GM12878 (cell line): ENCODE measurements at regions of chr10 and their contacts with region 1.

Region 1: GRCh38 chr10:5813287-5814109 is at the start of gene GDI2:
- DNase-seq: peak; percentile 82
- ATAC-seq: peak; percentile 85
- H3K4me3 ChIP-seq: peak within 1 kb of the TSS; percentile 91
- H3K27ac ChIP-seq: peak within 1 kb of the TSS; percentile 97
- H3K4me1 ChIP-seq: peaks cover 41% of the 10 kb centered on the region
- H3K27me3 ChIP-seq: no peaks in the 10 kb centered on the region
- CTCF ChIP-seq: peak in 1 of 3 experiments; percentile 8; a peak in 1 of 6 replicates
- EP300 ChIP-seq: no peak
- POLR2A ChIP-seq: peak; percentile 90
- RAD21 ChIP-seq: no peak
- polyA plus RNA-seq, gene GDI2: 264 to 334 TPM

Region 2: DNA sequence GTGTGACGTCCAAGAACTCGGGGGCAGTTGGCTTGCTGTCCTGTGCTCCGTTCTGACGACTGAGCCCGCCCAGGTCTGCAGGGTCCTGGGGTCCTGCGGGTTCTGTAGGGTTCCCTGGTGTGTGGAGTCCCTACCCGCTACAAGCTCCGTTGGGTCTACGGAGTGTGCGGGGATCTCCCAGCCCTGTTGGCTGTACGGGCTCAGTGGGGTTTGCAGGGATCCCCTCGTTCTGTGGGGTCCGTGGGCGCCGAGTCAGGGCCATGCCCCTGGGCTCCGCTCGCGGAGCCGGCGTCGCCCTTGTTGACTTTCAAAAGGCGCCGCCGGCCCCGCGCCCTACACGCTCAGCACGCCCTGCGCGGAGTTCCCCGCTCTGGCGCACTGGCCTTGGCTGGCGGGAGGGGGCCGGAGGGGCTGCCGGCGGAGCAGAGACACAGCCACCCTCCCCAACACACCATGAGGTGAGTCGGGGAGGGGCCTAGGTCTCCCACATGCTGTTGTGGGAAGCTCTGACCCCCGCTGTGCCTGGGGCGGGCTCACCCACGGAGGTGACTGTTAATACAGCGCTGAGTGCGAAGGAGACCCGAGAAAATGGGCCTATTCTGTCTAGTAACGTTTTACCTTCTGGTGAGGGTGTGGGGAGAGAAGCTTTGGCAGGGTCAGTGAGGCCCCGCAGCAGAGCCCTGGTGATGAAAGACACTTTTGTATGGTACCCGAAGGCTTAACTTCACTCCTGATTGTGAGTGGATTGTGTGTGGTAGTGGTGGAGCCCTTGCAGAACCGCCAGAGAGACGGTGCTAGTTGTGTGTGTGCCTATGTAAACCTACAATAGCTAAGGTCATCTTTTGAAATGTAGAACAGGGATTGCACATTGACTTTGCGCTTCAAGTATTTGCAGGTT is 120.8 kb before region 1 on chr10:
- CTCF ChIA-PET with region 1: interaction called, 8 read pairs
- POLR2A ChIA-PET with region 1: interaction called, 23 read pairs
- RAD21 ChIA-PET with region 1: no interaction called
- SMC1A ChIA-PET with region 1: interaction called, 13 read pairs
- in situ Hi-C with region 1: no loop called
- intact Hi-C with region 1: no loop called
- DNase-seq: peak; percentile 32
- ATAC-seq: peak; percentile 90
- H3K4me3 ChIP-seq: peak overlapping the region; percentile 83
- H3K27ac ChIP-seq: peak overlapping the region; percentile 77
- H3K4me1 ChIP-seq: peaks cover 21% of the 10 kb centered on the region
- H3K27me3 ChIP-seq: no peaks in the 10 kb centered on the region
- CTCF ChIP-seq: 0 out of 6 replicates have a peak, but pooled peaks of 1 of the 3 experiments have one; percentile 5
- EP300 ChIP-seq: peak in 1 of 2 experiments; percentile 40; a peak in 1 of 4 replicates
- POLR2A ChIP-seq: peak; percentile 73
- RAD21 ChIP-seq: no peak

Region 3: DNA sequence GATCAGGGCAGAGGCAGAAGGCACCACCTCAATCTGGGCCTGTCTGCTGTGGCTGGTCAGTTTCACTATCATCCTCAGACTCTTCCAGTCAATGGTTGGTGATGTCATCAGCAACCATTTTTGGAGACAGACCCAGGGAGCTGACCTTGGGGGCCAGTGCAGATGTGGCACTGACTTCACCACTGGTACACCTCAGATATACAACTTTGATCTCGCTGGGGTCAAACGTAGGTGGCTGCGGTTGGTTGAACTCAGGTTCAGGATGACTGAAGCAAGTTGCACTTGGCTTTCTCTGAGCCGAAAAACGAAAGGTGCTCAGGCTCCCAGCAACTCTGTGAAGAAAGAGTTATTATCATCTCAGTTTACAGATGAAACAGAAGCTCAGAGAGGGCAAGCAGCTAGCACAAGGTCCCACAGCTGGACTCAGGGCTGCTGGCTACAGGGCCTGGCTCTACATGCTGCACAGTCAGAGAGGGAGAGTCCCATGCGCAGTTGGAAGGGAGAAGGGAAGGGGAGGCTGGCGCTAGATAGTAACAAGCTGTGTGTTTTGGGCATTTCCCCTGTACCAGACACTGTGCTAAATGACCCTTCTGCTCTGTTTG is 49.0 kb after region 1 on chr10:
- CTCF ChIA-PET with region 1: interaction called, 21 read pairs
- POLR2A ChIA-PET with region 1: interaction called, 19 read pairs
- RAD21 ChIA-PET with region 1: interaction called, 25 read pairs
- SMC1A ChIA-PET with region 1: interaction called, 23 read pairs
- in situ Hi-C with region 1: no loop called
- intact Hi-C with region 1: loop called (anchors 2 kb)
- DNase-seq: peak; percentile 94
- ATAC-seq: peak; percentile 96
- H3K4me3 ChIP-seq: peak overlapping the region; percentile 34
- H3K27ac ChIP-seq: peak overlapping the region; percentile 73
- H3K4me1 ChIP-seq: peaks cover 20% of the 10 kb centered on the region
- H3K27me3 ChIP-seq: no peaks in the 10 kb centered on the region
- CTCF ChIP-seq: no peak
- EP300 ChIP-seq: peak; percentile 74 to 88; a peak in 2 of 4 replicates
- POLR2A ChIP-seq: peak; percentile 46; the same call in 1 of the 2 replicates
- RAD21 ChIP-seq: no peak

Region 4: GRCh38 chr10:5889624-5890451 is 76.3 kb after region 1 on chr10 and contains the starts of genes ANKRD16 and FBH1:
- CTCF ChIA-PET with region 1: interaction called, 3 read pairs
- POLR2A ChIA-PET with region 1: interaction called, 25 read pairs
- RAD21 ChIA-PET with region 1: interaction called, 26 read pairs
- SMC1A ChIA-PET with region 1: interaction called, 22 read pairs
- in situ Hi-C with region 1: no loop called
- intact Hi-C with region 1: loop called (anchors 5 kb)
- DNase-seq: peak; percentile 78
- ATAC-seq: peak; percentile 92
- H3K4me3 ChIP-seq: peak within 1 kb of the TSS; percentile 96
- H3K27ac ChIP-seq: peak within 1 kb of the TSS; percentile 73
- H3K4me1 ChIP-seq: peaks cover 14% of the 10 kb centered on the region
- H3K27me3 ChIP-seq: no peaks in the 10 kb centered on the region
- CTCF ChIP-seq: peak in 1 of 3 experiments; percentile 2; a peak in 1 of 6 replicates
- EP300 ChIP-seq: no peak
- POLR2A ChIP-seq: peak; percentile 95
- RAD21 ChIP-seq: no peak
- polyA plus RNA-seq, gene ANKRD16: 1.4 to 2.9 TPM
- polyA plus RNA-seq, gene FBH1: 6.1 to 19.0 TPM

Region 5: DNA sequence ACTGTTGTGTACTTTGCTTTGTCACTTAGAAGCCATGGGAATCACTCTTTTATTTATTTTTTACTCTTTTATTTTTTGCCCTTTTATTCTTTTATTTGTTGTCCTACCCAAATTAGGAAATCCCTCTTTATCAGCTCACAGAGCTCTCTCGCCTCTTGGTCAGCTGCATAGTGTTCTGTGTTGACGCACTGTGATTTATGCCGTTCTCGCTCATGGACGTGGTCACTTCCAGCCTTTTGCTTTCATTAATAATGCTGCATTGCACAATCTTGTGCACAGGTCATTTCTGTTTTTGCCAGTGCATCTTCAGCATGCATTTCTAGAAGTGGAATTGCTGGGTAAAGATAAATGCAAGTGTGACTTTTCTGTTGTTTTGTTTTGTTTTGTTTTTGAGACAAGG is 118.8 kb after region 1 on chr10:
- CTCF ChIA-PET with region 1: no interaction called
- POLR2A ChIA-PET with region 1: no interaction called
- RAD21 ChIA-PET with region 1: no interaction called
- SMC1A ChIA-PET with region 1: no interaction called
- in situ Hi-C with region 1: no loop called
- intact Hi-C with region 1: no loop called
- DNase-seq: no peak
- ATAC-seq: no peak
- H3K4me3 ChIP-seq: no peak overlapping the region
- H3K27ac ChIP-seq: no peak overlapping the region
- H3K4me1 ChIP-seq: no peaks in the 10 kb centered on the region
- H3K27me3 ChIP-seq: no peaks in the 10 kb centered on the region
- CTCF ChIP-seq: no peak
- EP300 ChIP-seq: no peak
- POLR2A ChIP-seq: no peak
- RAD21 ChIP-seq: no peak